ENCODE measurements at regions of chrX and their contacts with region 1.

Region 1: GRCh38 chrX:13646154-13646549 is 6.8 kb upstream of the TCEANC start:
- DNase-seq: no peak
- H3K4me3 Mint-ChIP-seq: no peak overlapping the region
- H3K27ac Mint-ChIP-seq: no peak overlapping the region
- H3K4me1 Mint-ChIP-seq: peaks cover 8% of the 10 kb centered on the region
- H3K27me3 Mint-ChIP-seq: no peaks in the 10 kb centered on the region

Region 2: GRCh38 chrX:13506574-13506973 is 139.6 kb before region 1 on chrX:
- intact Hi-C with region 1: loop called (anchors 1 kb)
- DNase-seq: peak; percentile 10
- H3K4me3 Mint-ChIP-seq: no peak overlapping the region
- H3K27ac Mint-ChIP-seq: no peak overlapping the region
- H3K4me1 Mint-ChIP-seq: peaks cover 6% of the 10 kb centered on the region
- H3K27me3 Mint-ChIP-seq: no peaks in the 10 kb centered on the region

Region 3: DNA sequence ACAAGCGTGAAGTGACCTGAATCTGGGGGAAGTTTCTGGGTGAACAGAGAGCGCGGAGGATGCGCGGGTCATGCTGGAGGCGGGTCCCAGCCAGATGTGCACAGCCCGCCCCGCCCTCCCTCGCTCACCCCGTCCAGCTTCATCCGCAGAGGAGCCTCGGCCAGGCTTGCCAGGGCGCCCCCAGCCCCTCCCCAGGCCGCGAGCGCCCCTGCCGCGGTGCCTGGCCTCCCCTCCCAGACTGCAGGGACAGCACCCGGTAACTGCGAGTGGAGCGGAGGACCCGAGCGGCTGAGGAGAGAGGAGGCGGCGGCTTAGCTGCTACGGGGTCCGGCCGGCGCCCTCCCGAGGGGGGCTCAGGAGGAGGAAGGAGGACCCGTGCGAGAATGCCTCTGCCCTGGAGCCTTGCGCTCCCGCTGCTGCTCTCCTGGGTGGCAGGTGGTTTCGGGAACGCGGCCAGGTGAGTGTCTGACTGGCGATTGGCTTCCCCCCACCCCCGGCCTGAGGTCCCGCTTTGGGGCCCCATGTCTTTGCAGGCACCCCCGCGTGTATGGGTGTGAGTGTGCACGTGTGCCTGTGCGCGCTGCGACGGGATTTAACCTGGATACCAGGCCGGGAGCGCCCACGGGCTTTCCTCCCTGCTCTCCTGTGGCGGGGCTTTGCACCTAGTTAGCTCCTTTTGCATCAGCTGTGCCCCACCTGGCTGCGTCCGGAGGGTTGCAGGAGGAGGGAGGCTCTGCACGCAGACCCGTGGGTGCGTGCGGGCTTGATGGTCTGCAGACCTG is 76.5 kb before region 1 on chrX and contains the start of gene EGFL6:
- intact Hi-C with region 1: loop called (anchors 5 kb)
- DNase-seq: no peak
- H3K4me3 Mint-ChIP-seq: peak within 1 kb of the TSS; percentile 69
- H3K27ac Mint-ChIP-seq: no peak within 1 kb of the TSS
- H3K4me1 Mint-ChIP-seq: peaks cover 33% of the 10 kb centered on the region
- H3K27me3 Mint-ChIP-seq: peaks cover 29% of the 10 kb centered on the region
- total RNA-seq, gene EGFL6: 2.3 and 3.4 TPM in 2 replicates

Region 4: DNA sequence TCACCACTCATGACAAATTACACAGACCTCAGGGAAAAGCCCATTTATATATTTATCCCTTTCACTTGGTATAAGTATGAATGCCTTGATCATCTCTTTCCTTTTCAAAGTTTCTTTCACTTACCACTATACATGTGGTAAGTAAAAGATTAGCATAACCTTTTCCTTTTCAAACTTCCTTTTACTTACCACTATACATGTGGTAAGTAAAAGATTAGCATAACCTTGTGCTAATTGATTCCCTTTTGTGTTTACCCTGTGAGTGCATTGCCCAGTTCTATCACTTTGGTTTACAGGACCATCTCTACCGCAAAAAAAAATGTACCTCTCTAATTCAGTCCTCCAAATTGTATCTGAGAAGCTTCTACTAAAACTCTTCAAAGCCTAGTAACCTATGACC is 25.9 kb before region 1 on chrX:
- intact Hi-C with region 1: loop called (anchors 1 kb)
- DNase-seq: no peak
- H3K4me3 Mint-ChIP-seq: no peak overlapping the region
- H3K27ac Mint-ChIP-seq: no peak overlapping the region
- H3K4me1 Mint-ChIP-seq: peaks cover 10% of the 10 kb centered on the region
- H3K27me3 Mint-ChIP-seq: no peaks in the 10 kb centered on the region

Measured in activated T-helper 2 cell treated with anti-CD3 and anti-CD28 coated beads, Interferon-gamma antibody, Interleukin-2, Interleukin-4, amounts not matched to agents 10 μg/mL and 5 μg/mL and 100 μg/mL, durations not matched to agents 14 hours and 24 hours and 36 hours (primary cell).